Activated CD4-positive, alpha-beta T cell treated with anti-CD3 and anti-CD28 coated beads, Interleukin-2, amount 10 ng/mL, durations not matched to agents 7 days and 5 days (primary cell): ENCODE measurements at regions of chr4 and their contacts with region 1.

Region 1: GRCh38 chr4:147866532-147867271 is 134.8 kb downstream of the ARHGAP10 start:
- DNase-seq: peak; percentile 95
- H3K4me3 Mint-ChIP-seq: no peak overlapping the region
- H3K27ac Mint-ChIP-seq: no peak overlapping the region
- H3K4me1 Mint-ChIP-seq: peaks cover 3% of the 10 kb centered on the region
- H3K27me3 Mint-ChIP-seq: no peaks in the 10 kb centered on the region

Region 2: GRCh38 chr4:147617173-147617840 is 249.4 kb before region 1 on chr4 and contains the start of gene TMEM184C:
- CTCF ChIA-PET with region 1: interaction called, 17 read pairs
- POLR2A ChIA-PET with region 1: no interaction called
- DNase-seq: peak; percentile 99
- H3K4me3 Mint-ChIP-seq: peak within 1 kb of the TSS; percentile 88
- H3K27ac Mint-ChIP-seq: peak within 1 kb of the TSS; percentile 95
- H3K4me1 Mint-ChIP-seq: peaks cover 32% of the 10 kb centered on the region
- H3K27me3 Mint-ChIP-seq: peaks cover 14% of the 10 kb centered on the region
- total RNA-seq, gene TMEM184C: 17.4 to 19.2 TPM

Region 3: DNA sequence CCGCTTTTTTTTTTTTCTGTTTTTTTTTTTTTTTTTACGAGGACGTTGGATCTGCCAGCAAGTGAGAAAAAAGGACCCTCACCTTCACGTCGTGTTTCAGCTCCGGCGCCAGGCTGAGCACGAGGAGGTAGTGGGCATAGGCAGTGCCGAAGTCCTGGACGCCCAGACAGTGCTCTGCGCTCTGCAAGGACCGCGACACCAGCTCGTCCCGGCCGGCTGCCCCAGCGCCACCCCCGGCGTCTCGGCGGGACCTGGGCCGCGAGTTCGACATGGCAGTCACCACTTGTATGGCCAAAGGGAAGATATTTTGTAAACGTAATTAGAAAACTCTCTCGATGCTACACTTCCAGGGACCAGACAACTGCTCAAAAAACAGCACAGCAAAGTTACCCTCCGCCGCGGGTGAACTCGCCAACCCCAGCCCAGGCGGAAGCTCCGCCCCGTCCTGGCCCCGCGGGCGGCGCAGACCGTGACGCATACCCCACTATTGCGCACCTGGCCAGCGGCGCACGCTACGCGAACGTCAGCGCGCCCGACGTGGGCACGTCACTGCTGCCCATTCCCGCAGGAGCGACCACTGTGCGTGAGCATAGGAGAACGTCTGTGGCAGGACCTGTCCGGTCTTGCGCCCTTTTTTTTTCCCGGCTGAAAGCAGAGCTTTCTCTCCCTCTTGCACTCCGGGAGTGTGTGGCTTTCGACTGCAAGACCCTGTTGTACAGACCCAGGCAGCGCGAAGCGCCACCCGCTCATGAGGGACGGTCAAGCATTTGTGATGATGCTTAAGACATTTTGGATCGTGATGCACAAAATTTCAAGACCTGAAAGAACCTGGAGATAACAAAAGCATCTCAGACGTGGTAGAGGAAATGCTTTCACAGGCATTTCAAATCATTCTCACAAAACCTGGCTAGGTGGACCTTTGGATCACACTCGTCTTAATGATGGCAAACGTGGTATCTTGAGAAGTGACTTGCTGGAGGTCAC is 182.7 kb before region 1 on chr4 and contains the start of gene PRMT9:
- CTCF ChIA-PET with region 1: interaction called, 23 read pairs
- POLR2A ChIA-PET with region 1: no interaction called
- DNase-seq: peak; percentile 87
- H3K4me3 Mint-ChIP-seq: peak within 1 kb of the TSS; percentile 98
- H3K27ac Mint-ChIP-seq: peak within 1 kb of the TSS; percentile 96
- H3K4me1 Mint-ChIP-seq: peaks cover 36% of the 10 kb centered on the region
- H3K27me3 Mint-ChIP-seq: peaks cover 12% of the 10 kb centered on the region
- total RNA-seq, gene PRMT9: 11.5 to 12.0 TPM

Region 4: DNA sequence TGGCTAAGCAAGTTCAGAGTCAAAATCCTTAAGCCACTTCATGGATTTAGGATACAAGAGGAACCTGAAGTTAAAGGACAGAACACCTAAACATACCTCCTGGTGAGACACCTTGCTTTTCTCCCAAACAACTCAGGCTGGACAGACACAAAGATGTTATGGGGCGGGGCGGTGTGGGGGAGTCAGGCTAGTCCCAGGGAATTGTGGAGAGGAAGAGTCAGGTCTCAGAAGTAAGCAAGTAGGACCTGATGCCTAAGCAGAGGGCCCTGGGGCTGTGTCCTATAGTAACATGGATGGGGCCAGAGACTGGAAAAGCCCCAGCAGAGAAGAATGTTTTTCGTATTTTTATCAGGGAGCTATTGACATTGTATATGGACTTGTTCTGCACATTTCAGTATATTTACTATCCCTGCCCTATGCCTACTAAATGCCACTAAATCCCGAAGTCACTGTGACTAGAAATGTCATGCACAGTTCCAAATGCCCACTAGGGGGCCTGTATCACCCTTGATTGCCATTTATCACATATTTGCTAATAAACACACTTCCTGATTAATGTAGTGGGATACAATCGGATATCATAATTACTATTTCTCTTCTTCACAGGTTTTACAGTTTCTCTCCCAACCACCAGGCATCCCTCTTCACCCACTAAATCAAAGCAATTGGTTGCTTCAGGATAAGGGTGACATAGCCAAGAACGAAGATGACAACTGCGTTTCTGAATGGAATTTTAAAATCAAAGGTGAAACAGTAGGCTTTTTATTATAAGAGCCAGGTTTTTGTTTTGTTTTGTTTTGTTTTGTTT is 158.6 kb before region 1 on chr4:
- CTCF ChIA-PET with region 1: interaction called, 20 read pairs
- POLR2A ChIA-PET with region 1: no interaction called
- DNase-seq: peak; percentile 59
- H3K4me3 Mint-ChIP-seq: no peak overlapping the region
- H3K27ac Mint-ChIP-seq: no peak overlapping the region
- H3K4me1 Mint-ChIP-seq: peaks cover 7% of the 10 kb centered on the region
- H3K27me3 Mint-ChIP-seq: peaks cover 2% of the 10 kb centered on the region

Region 5: DNA sequence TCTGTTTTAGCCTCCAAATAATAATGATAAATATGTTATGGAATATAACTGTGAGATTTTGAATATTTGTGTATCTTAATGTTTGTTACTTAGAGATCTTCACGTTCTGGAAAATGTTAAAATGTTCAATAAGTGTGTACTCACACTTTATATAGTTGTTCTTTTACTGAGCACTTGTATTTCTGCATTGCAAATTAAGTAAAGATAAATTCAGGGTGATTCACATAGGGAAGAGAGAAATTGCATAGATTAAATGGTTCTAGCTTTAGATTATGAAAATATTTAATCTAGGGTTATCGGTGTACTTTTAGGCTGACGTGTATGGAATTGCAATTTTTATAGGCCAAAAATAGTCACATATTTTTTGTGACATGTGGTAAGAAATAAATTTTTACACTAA is 13.8 kb after region 1 on chr4:
- CTCF ChIA-PET with region 1: interaction called, 13 read pairs
- POLR2A ChIA-PET with region 1: no interaction called
- DNase-seq: no peak
- H3K4me3 Mint-ChIP-seq: no peak overlapping the region
- H3K27ac Mint-ChIP-seq: no peak overlapping the region
- H3K4me1 Mint-ChIP-seq: no peaks in the 10 kb centered on the region
- H3K27me3 Mint-ChIP-seq: no peaks in the 10 kb centered on the region

Region 6: DNA sequence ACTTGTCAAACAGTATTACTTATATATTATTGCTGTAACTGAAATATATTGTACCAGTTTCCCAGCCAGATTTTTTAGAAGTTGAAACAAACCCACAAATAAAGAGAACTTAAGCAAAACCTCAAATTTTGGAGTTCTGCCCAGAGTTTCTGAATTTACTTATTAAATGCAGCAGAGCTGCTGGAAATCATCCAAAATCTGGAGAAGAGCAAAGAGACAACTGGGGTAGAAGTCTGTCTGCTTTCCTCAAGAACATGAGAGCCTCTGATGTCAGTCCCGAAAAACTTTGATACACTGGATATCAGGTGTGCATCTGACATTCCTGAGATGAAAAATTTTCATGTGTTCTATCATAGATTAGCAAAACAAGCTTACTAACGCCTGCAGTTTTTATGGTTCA is 249.6 kb after region 1 on chr4:
- CTCF ChIA-PET with region 1: no interaction called
- POLR2A ChIA-PET with region 1: no interaction called
- DNase-seq: no peak
- H3K4me3 Mint-ChIP-seq: no peak overlapping the region
- H3K27ac Mint-ChIP-seq: no peak overlapping the region
- H3K4me1 Mint-ChIP-seq: peaks cover 10% of the 10 kb centered on the region
- H3K27me3 Mint-ChIP-seq: no peaks in the 10 kb centered on the region